ENCODE measurements at regions of chr3 and their contacts with region 1.

Region 1: DNA sequence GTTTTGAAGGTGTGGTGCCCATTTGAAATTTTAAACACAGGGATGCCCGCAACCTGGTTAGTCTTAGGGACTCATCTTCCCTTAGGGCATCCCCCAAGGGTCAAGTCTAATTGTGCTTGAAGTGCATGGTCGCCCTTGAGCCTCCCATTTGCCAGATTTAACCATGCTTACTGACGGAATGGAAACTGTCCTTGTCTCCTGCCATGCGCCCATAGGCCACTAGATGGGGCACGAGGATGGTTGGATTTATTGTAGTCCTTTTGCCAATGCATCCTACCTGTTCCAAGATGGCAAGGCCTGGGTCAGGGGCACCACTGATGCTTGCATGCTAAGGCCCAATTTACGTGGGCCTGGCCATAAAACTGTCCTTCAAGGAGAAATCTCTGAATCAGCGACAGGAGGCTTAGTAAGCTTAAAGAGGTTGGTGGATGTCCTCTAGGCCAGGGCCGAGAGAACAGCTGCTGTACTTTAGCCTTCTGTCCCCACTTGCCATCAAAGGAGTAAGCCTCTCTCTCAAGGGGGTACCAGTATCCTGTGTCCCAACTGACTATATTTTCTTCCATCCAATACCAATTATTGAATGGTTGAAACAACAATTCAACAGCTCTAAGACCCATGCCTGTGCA is 355.4 kb downstream of the OTOL1 start:
- DNase-seq: peak; percentile 73
- H3K4me3 Mint-ChIP-seq: no peak overlapping the region
- H3K27ac Mint-ChIP-seq: no peak overlapping the region
- H3K4me1 Mint-ChIP-seq: no peaks in the 10 kb centered on the region
- H3K27me3 Mint-ChIP-seq: no peaks in the 10 kb centered on the region
- CTCF ChIP-seq: peak; percentile 91

Region 2: GRCh38 chr3:162295323-162295983 is 443.4 kb after region 1 on chr3:
- CTCF ChIA-PET with region 1: no interaction called
- POLR2A ChIA-PET with region 1: no interaction called
- intact Hi-C with region 1: loop called (anchors 10 kb)
- DNase-seq: peak; percentile 71
- H3K4me3 Mint-ChIP-seq: peak overlapping the region; percentile 26
- H3K27ac Mint-ChIP-seq: peak overlapping the region; percentile 63
- H3K4me1 Mint-ChIP-seq: peaks cover 11% of the 10 kb centered on the region
- H3K27me3 Mint-ChIP-seq: no peaks in the 10 kb centered on the region
- CTCF ChIP-seq: no peak

Region 3: GRCh38 chr3:163490119-163490518 is 1638.1 kb after region 1 on chr3:
- CTCF ChIA-PET with region 1: no interaction called
- POLR2A ChIA-PET with region 1: no interaction called
- intact Hi-C with region 1: loop called (anchors 2 kb)
- DNase-seq: peak; percentile 76
- H3K4me3 Mint-ChIP-seq: no peak overlapping the region
- H3K27ac Mint-ChIP-seq: no peak overlapping the region
- H3K4me1 Mint-ChIP-seq: no peaks in the 10 kb centered on the region
- H3K27me3 Mint-ChIP-seq: no peaks in the 10 kb centered on the region
- CTCF ChIP-seq: peak; percentile 72

Measured in MCF 10A (cell line).